ENCODE measurements at regions of chr19 and their contacts with region 1.

Region 1: DNA sequence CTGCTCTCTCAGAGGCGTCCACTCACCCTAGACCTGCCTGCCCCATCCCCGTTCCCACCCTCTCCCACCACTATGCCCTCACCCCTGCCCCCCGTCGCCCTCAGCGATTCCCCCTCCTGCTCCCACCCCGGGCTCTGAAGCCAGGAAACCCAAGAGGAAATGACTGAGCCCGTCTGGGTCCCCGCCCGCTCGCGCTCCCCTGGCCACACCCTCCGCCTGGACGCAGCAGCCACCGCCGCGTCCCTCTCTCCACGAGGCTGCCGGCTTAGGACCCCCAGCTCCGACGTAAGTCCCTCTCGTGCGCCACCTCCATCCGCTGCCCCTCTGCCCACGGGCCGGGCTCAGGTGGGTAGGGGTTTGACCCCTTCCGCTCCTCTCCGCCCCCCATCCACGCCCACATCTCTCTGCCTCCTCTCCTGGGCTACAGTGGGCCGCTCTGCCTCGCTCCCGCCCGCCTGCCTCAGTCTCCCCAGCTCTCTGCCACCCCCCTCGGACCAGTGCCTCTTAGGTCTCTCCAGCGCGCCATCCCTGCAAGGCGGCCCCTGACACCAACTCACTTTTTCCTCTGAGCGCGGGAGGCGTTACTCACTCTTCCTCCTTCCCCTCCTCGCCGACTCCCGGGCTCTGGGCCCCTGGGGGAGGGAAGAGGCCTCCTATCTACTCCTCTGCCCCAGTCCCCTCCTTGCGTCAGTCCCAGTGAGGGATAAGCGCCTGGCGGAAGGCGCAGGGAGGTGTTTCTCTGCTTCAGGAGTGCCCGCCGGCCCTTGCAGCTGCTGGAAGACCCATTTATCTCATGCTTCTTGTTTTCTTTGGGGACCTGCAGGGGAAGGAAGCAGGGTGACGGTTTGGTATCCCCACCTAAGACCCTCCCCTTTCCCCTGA is at the start of gene FXYD5:
- DNase-seq: peak; percentile 79
- H3K4me3 ChIP-seq: peak within 1 kb of the TSS; percentile 78 to 98 (median 82)
- H3K27ac ChIP-seq: peak within 1 kb of the TSS; percentile 95
- H3K4me1 ChIP-seq: peaks cover 20% of the 10 kb centered on the region
- H3K27me3 ChIP-seq: no peaks in the 10 kb centered on the region
- CTCF ChIP-seq: no peak
- POLR2A ChIP-seq: peak; percentile 77
- total RNA-seq, gene FXYD5: 219 and 223 TPM in 2 replicates

Region 2: DNA sequence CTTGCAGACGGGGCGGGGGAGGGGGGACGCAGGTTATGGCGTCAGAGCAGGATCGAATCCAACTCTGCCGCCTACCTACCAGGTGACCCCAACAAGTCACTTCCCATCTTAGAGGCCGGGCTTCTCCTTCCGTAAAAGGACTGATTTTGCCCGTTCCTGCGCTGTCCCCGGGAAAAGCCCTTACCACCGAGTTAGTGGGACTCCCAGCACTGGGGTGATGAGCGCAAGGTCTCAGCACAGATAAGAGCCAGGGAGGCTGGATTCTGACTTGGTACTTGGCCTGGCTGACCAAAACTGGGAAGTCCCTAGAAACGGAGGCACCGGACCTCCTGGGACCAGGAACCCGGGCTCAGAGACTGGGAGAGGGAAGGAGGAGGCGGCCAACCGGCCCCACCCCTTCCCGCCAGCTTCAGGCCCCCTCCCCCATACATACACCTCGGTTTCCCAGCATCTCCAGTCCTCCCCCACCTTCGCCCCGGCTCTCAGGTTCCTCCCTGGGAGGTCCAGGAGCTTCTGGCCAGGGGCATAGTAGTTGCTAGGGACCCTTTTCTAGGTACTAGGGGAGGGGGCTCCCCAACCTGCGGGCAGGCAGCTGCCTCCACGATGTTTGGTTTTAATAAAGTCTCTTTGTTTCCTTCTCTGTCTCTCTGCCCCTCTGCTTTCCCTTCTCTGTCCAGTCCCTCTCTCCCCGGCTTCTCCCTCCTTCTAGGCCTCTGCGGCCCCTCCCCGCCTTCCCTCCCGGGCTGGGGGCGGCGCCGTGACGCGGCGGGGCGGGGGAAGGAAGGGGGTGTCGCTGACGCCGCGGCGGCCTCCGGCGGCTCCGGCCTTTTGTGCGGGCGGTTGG is 155.0 kb before region 1 on chr19 and contains the start of gene GRAMD1A:
- CTCF ChIA-PET with region 1: no interaction called
- POLR2A ChIA-PET with region 1: no interaction called
- dilution Hi-C with region 1: no loop called
- intact Hi-C with region 1: no loop called
- DNase-seq: peak; percentile 87
- H3K4me3 ChIP-seq: peak within 1 kb of the TSS; percentile 75 to 91 (median 83)
- H3K27ac ChIP-seq: peak within 1 kb of the TSS; percentile 89
- H3K4me1 ChIP-seq: peaks cover 66% of the 10 kb centered on the region
- H3K27me3 ChIP-seq: no peaks in the 10 kb centered on the region
- CTCF ChIP-seq: no peak
- POLR2A ChIP-seq: peak; percentile 84
- total RNA-seq, gene GRAMD1A: 130 and 139 TPM in 2 replicates

Region 3: GRCh38 chr19:35076657-35077056 is 78.1 kb before region 1 on chr19:
- CTCF ChIA-PET with region 1: no interaction called
- POLR2A ChIA-PET with region 1: no interaction called
- dilution Hi-C with region 1: no loop called
- intact Hi-C with region 1: no loop called
- DNase-seq: no peak
- H3K4me3 ChIP-seq: no peak overlapping the region
- H3K27ac ChIP-seq: no peak overlapping the region
- H3K4me1 ChIP-seq: no peaks in the 10 kb centered on the region
- H3K27me3 ChIP-seq: no peaks in the 10 kb centered on the region
- CTCF ChIP-seq: no peak
- POLR2A ChIP-seq: no peak

Region 4: DNA sequence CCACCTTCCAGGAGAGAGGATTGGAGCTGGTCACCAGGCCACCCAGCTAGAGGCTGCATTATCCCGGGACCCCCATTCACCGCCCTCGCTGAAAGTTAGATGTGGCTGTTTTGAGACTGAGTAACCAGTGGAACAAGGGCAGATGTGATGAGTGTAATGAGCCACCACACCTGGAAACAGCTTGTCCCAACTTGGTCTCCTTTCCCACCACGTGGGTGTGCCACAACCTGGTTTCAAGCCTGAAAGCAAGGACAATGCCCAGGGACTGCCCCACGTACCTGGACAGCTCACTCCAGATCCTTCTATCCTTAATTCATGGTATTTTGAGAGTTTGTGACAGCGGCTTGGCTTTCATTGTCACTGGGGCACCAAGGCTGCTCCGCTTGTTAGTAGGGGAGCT is 26.9 kb before region 1 on chr19:
- CTCF ChIA-PET with region 1: no interaction called
- POLR2A ChIA-PET with region 1: no interaction called
- dilution Hi-C with region 1: no loop called
- intact Hi-C with region 1: no loop called
- DNase-seq: no peak
- H3K4me3 ChIP-seq: no peak overlapping the region
- H3K27ac ChIP-seq: no peak overlapping the region
- H3K4me1 ChIP-seq: peaks cover 3% of the 10 kb centered on the region
- H3K27me3 ChIP-seq: no peaks in the 10 kb centered on the region
- CTCF ChIP-seq: no peak
- POLR2A ChIP-seq: no peak

Region 5: GRCh38 chr19:35213663-35214632 is 59.2 kb after region 1 on chr19:
- CTCF ChIA-PET with region 1: no interaction called
- POLR2A ChIA-PET with region 1: no interaction called
- dilution Hi-C with region 1: no loop called
- intact Hi-C with region 1: loop called (anchors 2 kb)
- DNase-seq: peak; percentile 96
- H3K4me3 ChIP-seq: no peak overlapping the region
- H3K27ac ChIP-seq: no peak overlapping the region
- H3K4me1 ChIP-seq: peaks cover 16% of the 10 kb centered on the region
- H3K27me3 ChIP-seq: peaks cover 2 to 4% of the 10 kb centered on the region in 2 experiments
- CTCF ChIP-seq: no peak
- POLR2A ChIP-seq: no peak

Region 6: DNA sequence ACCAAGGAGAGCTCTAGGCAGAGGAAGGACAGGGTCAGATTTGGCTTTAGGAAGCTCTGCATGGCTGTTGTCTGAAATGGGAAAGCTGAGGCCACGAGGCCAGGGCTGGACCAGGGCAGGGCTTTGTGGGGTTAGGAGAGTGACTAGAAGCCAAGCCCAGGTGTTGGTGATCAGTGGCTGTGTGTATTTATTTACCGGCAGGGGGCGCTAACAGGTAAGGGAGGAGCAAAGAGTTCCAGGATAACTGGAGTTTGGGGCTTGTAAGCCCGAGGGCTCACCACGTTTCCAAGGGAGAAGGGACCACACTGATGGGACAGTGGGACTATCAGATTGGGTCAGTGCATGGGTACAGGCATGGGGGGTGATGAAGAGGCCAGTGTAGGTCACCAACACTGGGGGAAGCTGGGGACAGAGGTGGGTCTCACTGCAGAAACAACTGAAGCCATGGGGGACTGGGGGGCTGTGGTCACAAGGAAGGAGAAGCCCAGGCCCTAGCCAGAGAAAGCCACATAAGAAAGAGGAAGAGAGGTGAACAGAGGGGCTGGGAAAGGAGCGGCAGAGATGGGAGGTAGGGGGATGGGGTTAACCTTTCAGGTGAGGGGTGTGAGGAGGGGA is 394.5 kb after region 1 on chr19:
- CTCF ChIA-PET with region 1: no interaction called
- POLR2A ChIA-PET with region 1: no interaction called
- dilution Hi-C with region 1: no loop called
- intact Hi-C with region 1: no loop called
- DNase-seq: peak; percentile 48
- H3K4me3 ChIP-seq: no peak overlapping the region
- H3K27ac ChIP-seq: no peak overlapping the region
- H3K4me1 ChIP-seq: peaks cover 16% of the 10 kb centered on the region
- H3K27me3 ChIP-seq: no peaks in the 10 kb centered on the region
- CTCF ChIP-seq: peak; percentile 65 to 77
- POLR2A ChIP-seq: no peak

Measured in endothelial cell of umbilical vein (primary cell).